Panc1 (cell line): ENCODE measurements at regions of chr12 and their contacts with region 1.

Region 1: DNA sequence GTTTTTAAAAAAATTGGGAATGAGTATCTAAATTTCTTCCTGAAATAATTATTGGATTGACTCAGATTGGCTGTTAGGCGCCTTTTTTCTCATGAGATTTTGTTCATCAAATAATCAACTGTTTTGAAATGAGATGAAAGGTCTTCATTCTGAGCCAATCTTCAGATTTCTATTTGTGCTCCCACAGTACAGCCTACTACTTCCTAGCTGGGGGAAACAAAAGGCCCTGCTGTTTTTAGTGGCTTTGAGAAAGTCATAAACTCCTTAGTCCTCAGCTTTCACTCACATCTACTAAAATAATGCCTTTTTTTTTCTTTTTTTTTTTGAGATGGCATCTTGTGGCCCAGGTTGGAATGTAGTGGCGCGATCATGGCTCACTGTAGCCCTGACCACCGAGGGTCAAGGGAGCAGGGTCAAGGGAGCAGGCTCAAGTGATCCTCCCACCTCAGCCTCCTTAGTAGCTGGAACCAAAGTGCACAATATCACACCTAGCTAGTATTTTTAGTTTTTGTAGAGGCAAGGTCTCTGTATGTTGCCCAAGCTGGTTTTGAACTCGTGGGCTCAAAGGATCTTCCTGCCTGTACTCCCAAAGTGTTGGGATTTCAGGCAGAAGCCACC is 15.2 kb downstream of the NACA start:
- DNase-seq: no peak
- ATAC-seq: 0 out of 2 replicates have a peak, but pooled peaks have one; percentile 40
- H3K4me3 ChIP-seq: no peak overlapping the region
- H3K27ac ChIP-seq: no peak overlapping the region
- H3K4me1 ChIP-seq: no peaks in the 10 kb centered on the region
- H3K27me3 ChIP-seq: no peaks in the 10 kb centered on the region
- CTCF ChIP-seq: no peak

Region 2: GRCh38 chr12:56614627-56615026 is 95.2 kb before region 1 on chr12:
- CTCF ChIA-PET with region 1: no interaction called
- POLR2A ChIA-PET with region 1: interaction called, 11 read pairs
- in situ Hi-C with region 1: no loop called
- intact Hi-C with region 1: no loop called
- DNase-seq: no peak
- ATAC-seq: no peak
- H3K4me3 ChIP-seq: no peak overlapping the region
- H3K27ac ChIP-seq: no peak overlapping the region
- H3K4me1 ChIP-seq: no peaks in the 10 kb centered on the region
- H3K27me3 ChIP-seq: no peaks in the 10 kb centered on the region
- CTCF ChIP-seq: no peak

Region 3: GRCh38 chr12:56688129-56688845 is 21.6 kb before region 1 on chr12 and contains the start of gene PTGES3:
- CTCF ChIA-PET with region 1: no interaction called
- POLR2A ChIA-PET with region 1: interaction called, 10 read pairs
- in situ Hi-C with region 1: no loop called
- intact Hi-C with region 1: no loop called
- DNase-seq: peak; percentile 92
- ATAC-seq: peak; percentile 88
- H3K4me3 ChIP-seq: peak within 1 kb of the TSS; percentile 97 to 99
- H3K27ac ChIP-seq: peak within 1 kb of the TSS; percentile 100
- H3K4me1 ChIP-seq: no peaks in the 10 kb centered on the region
- H3K27me3 ChIP-seq: no peaks in the 10 kb centered on the region
- CTCF ChIP-seq: no peak
- total RNA-seq, gene PTGES3: 339 TPM

Region 4: DNA sequence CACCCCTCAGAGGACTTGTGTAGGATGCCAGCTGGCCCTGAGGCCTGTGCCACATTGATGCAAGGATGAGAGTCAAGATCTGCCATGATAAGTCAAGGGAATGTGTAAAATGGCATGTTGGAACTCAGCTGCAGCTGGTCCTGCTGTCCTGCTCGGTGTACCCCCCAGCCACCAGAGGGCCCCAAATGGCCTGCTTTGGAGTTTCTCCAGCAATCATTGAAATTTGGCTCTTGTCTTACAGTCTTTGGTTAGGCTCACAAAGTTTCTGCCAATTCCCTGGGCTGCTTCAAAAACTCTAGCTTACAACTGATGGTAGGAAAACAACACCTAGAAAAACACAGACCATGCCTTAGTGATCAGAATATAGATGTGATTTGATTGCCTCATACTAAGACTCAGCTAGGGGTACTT is 130.1 kb after region 1 on chr12:
- CTCF ChIA-PET with region 1: no interaction called
- POLR2A ChIA-PET with region 1: no interaction called
- in situ Hi-C with region 1: no loop called
- intact Hi-C with region 1: no loop called
- DNase-seq: peak; percentile 13
- ATAC-seq: peak; percentile 88
- H3K4me3 ChIP-seq: no peak overlapping the region
- H3K27ac ChIP-seq: no peak overlapping the region
- H3K4me1 ChIP-seq: no peaks in the 10 kb centered on the region
- H3K27me3 ChIP-seq: peaks cover 2% of the 10 kb centered on the region
- CTCF ChIP-seq: peak; percentile 69